B cell (primary cell): ENCODE measurements at regions of chr3 and their contacts with region 1.

Region 1: DNA sequence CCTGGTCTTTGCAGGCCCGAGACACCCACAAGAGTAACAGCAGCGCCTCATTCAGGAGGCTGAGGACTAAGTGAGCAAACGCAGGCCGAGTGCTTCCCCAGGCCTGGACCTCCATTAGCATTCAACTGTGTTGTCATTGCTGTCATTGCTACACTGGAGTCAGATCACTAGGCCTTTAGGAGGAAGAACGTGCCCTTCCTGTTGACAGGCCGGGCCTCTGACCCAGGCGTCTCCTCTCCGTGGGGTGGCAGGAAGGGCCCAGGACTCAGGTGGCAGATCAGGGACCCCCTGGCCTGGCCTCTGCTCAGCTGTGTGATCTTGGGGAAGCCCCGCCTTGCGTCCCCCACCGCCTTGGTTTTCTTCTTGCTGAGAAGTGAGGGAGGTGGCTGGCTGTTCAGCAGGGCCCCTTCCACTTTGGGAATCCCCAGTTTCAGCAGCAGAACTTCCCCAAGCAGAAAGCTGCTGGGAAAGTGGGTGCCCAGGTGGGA is 19.1 kb downstream of the ZDHHC19 start:
- DNase-seq: peak; percentile 92
- ATAC-seq: peak; percentile 65
- H3K4me3 ChIP-seq: no peak overlapping the region
- H3K4me3 Mint-ChIP-seq: peak overlapping the region; percentile 80
- H3K27ac ChIP-seq: peak overlapping the region; percentile 91 to 94
- H3K27ac Mint-ChIP-seq: peak overlapping the region; percentile 98
- H3K4me1 ChIP-seq: peaks cover 39 to 68% of the 10 kb centered on the region in 2 donors
- H3K4me1 Mint-ChIP-seq: peaks cover 40% of the 10 kb centered on the region
- H3K27me3 ChIP-seq: no peaks in the 10 kb centered on the region
- H3K27me3 Mint-ChIP-seq: no peaks in the 10 kb centered on the region
- CTCF ChIP-seq: no peak

Region 2: GRCh38 chr3:196020373-196020772 is 171.7 kb before region 1 on chr3:
- CTCF ChIA-PET with region 1: no interaction called
- POLR2A ChIA-PET with region 1: no interaction called
- intact Hi-C with region 1: loop called (anchors 1 kb)
- DNase-seq: no peak
- ATAC-seq: no peak
- H3K4me3 ChIP-seq: no peak overlapping the region
- H3K4me3 Mint-ChIP-seq: no peak overlapping the region
- H3K27ac ChIP-seq: no peak overlapping the region
- H3K27ac Mint-ChIP-seq: no peak overlapping the region
- H3K4me1 ChIP-seq: no peaks in the 10 kb centered on the region
- H3K4me1 Mint-ChIP-seq: no peaks in the 10 kb centered on the region
- H3K27me3 ChIP-seq: no peaks in the 10 kb centered on the region
- H3K27me3 Mint-ChIP-seq: no peaks in the 10 kb centered on the region
- CTCF ChIP-seq: no peak

Region 3: GRCh38 chr3:196081791-196082618 is 110.1 kb before region 1 on chr3 and contains the start of gene TFRC:
- CTCF ChIA-PET with region 1: interaction called, 467 read pairs
- POLR2A ChIA-PET with region 1: no interaction called
- intact Hi-C with region 1: loop called (anchors 1 kb)
- DNase-seq: peak; percentile 97
- ATAC-seq: peak; percentile 93
- H3K4me3 ChIP-seq: peak within 1 kb of the TSS; percentile 79 to 99 (median 86)
- H3K4me3 Mint-ChIP-seq: peak within 1 kb of the TSS; percentile 93
- H3K27ac ChIP-seq: peak within 1 kb of the TSS; percentile 84 to 97
- H3K27ac Mint-ChIP-seq: peak within 1 kb of the TSS; percentile 96
- H3K4me1 ChIP-seq: peaks cover 25 to 42% of the 10 kb centered on the region in 2 donors
- H3K4me1 Mint-ChIP-seq: peaks cover 44% of the 10 kb centered on the region
- H3K27me3 ChIP-seq: no peaks in the 10 kb centered on the region
- H3K27me3 Mint-ChIP-seq: no peaks in the 10 kb centered on the region
- CTCF ChIP-seq: no peak
- total RNA-seq, gene TFRC: 104 and 117 TPM in 2 replicates

Region 4: GRCh38 chr3:196268270-196269163 is 76.4 kb after region 1 on chr3:
- CTCF ChIA-PET with region 1: no interaction called
- POLR2A ChIA-PET with region 1: no interaction called
- intact Hi-C with region 1: no loop called
- DNase-seq: peak; percentile 40
- ATAC-seq: peak; percentile 57
- H3K4me3 ChIP-seq: no peak overlapping the region
- H3K4me3 Mint-ChIP-seq: no peak overlapping the region
- H3K27ac ChIP-seq: no peak overlapping the region
- H3K27ac Mint-ChIP-seq: peak overlapping the region; percentile 75
- H3K4me1 ChIP-seq: peaks cover 5 to 11% of the 10 kb centered on the region in 2 donors
- H3K4me1 Mint-ChIP-seq: peaks cover 19% of the 10 kb centered on the region
- H3K27me3 ChIP-seq: no peaks in the 10 kb centered on the region
- H3K27me3 Mint-ChIP-seq: no peaks in the 10 kb centered on the region
- CTCF ChIP-seq: no peak